ENCODE measurements at regions of chr12 and their contacts with region 1.

Region 1: DNA sequence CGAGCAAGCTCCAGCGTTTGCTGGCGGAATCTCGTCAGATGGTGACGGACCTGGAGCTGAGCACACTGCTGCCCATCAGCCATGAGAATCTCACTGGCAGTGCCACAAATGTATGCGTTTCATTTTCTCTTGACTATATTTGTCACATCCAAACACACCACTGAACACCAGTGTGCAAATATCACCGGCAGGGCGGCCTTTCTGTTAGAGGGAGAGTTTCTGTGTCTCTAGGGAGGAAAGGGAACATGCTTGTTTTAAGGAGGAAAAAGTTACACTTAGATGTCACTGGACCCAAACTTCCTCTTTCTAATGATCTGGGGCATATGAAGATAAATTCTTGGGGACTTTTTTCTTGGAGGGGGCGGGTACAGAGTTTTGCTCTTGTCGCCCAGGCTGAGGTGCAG is 21.9 kb upstream of the HIP1R start:
- DNase-seq: no peak
- ATAC-seq: no peak
- H3K4me3 ChIP-seq: no peak overlapping the region
- H3K27ac ChIP-seq: no peak overlapping the region
- H3K4me1 ChIP-seq: peaks cover 3% of the 10 kb centered on the region; the same call in 1 of the 2 replicates
- H3K27me3 ChIP-seq: no peaks in the 10 kb centered on the region
- CTCF ChIP-seq: no peak

Region 2: DNA sequence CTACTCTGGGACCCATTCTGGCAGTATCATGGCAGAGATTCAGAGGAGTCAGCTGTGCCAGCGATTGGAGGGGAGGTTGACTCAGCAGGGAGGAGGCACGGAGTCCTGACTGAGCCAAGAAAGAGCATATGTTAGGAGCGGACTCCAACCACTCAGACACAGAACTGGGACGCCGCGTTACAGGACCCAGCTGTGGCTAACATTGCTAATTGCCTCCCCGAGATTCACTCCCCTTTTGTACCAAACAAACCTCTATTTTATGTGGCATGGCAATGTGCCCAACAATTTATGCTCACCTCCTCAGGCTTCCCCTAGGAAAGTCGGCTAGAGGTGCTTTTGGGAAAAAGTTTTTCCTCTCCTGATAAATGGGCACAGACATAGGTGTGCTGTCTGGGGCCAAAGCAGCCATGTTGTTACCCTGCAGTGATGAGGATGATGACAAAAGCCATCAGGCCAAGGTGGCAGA is 375.6 kb before region 1 on chr12:
- CTCF ChIA-PET with region 1: no interaction called
- POLR2A ChIA-PET with region 1: no interaction called
- intact Hi-C with region 1: no loop called
- DNase-seq: peak; percentile 55
- ATAC-seq: peak; percentile 94
- H3K4me3 ChIP-seq: no peak overlapping the region
- H3K27ac ChIP-seq: no peak overlapping the region
- H3K4me1 ChIP-seq: no peaks in the 10 kb centered on the region
- H3K27me3 ChIP-seq: no peaks in the 10 kb centered on the region
- CTCF ChIP-seq: no peak

Region 3: DNA sequence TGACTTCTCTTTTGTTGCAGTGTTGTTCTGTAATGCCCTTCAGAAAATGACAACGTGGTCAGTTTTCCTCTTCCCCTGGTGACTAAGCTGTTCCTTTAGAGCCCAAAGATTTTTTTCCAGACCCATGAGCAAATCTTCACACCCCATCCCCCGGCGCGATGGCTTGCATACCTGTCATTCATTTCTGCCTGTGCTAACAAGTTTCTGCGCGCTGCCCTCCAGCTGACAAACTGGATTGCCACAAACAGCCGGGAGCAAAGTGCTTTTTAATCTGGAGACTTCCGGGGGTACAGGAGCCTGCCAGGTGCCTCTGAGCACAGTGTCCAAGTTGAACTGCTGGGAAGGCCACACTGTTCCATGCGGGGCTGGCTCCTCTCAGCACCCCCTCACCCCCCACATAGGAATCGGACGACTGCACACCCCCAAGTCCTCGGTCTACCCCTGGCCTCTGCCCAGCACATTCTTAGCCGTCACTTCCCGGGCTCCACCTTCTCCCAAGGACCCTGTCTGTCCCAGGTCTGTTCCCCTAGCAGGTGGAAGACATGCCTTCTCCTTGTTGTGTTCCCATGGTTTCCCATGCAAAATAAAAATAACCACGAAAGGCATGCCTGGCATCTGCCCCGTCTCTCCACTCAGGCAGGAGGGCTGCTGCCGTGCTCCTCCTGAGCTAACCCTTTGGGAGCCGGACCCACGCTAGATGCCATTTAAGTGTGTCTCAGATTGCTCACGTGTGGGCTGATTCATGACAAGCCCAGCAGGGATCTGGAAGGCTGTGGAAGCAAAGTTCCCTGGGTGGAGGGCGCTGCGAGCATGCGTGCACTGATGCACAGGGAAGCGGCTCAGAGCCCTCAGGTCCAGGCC is 706.1 kb after region 1 on chr12:
- CTCF ChIA-PET with region 1: no interaction called
- POLR2A ChIA-PET with region 1: interaction called, 18 read pairs
- intact Hi-C with region 1: no loop called
- DNase-seq: no peak
- ATAC-seq: no peak
- H3K4me3 ChIP-seq: no peak overlapping the region
- H3K27ac ChIP-seq: no peak overlapping the region
- H3K4me1 ChIP-seq: no peaks in the 10 kb centered on the region
- H3K27me3 ChIP-seq: no peaks in the 10 kb centered on the region
- CTCF ChIP-seq: no peak